OCI-LY7 (cell line): ENCODE measurements at regions of chr14 and their contacts with region 1.

Region 1: GRCh38 chr14:93970549-93970946 is 5.8 kb downstream of the ASB2 start:
- DNase-seq: peak; percentile 76
- H3K4me3 ChIP-seq: peak overlapping the region; percentile 64
- H3K27ac ChIP-seq: peak overlapping the region; percentile 57
- H3K4me1 ChIP-seq: peaks cover 93% of the 10 kb centered on the region
- CTCF ChIP-seq: peak; percentile 89

Region 2: DNA sequence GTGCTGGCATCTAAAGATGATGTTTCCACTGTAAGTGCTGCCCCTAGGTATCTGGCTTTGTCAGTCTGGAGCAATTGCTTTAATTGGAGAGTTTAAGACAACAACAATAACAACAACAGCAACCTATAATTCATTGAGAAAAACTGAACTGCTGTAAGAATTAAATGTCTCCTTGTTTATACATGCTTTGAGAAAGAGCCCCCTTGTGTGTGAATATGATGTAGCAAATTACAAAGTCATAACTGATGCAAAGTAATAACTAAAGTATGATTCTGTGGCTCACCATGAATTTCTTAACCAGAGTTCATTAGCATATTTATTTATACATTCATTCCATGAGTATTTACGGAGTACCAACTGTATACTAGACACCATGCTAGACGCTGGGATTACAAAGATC is 123.1 kb before region 1 on chr14:
- CTCF ChIA-PET with region 1: no interaction called
- POLR2A ChIA-PET with region 1: no interaction called
- intact Hi-C with region 1: no loop called
- DNase-seq: no peak
- H3K4me3 ChIP-seq: no peak overlapping the region
- H3K27ac ChIP-seq: no peak overlapping the region
- H3K4me1 ChIP-seq: no peaks in the 10 kb centered on the region
- CTCF ChIP-seq: no peak

Region 3: DNA sequence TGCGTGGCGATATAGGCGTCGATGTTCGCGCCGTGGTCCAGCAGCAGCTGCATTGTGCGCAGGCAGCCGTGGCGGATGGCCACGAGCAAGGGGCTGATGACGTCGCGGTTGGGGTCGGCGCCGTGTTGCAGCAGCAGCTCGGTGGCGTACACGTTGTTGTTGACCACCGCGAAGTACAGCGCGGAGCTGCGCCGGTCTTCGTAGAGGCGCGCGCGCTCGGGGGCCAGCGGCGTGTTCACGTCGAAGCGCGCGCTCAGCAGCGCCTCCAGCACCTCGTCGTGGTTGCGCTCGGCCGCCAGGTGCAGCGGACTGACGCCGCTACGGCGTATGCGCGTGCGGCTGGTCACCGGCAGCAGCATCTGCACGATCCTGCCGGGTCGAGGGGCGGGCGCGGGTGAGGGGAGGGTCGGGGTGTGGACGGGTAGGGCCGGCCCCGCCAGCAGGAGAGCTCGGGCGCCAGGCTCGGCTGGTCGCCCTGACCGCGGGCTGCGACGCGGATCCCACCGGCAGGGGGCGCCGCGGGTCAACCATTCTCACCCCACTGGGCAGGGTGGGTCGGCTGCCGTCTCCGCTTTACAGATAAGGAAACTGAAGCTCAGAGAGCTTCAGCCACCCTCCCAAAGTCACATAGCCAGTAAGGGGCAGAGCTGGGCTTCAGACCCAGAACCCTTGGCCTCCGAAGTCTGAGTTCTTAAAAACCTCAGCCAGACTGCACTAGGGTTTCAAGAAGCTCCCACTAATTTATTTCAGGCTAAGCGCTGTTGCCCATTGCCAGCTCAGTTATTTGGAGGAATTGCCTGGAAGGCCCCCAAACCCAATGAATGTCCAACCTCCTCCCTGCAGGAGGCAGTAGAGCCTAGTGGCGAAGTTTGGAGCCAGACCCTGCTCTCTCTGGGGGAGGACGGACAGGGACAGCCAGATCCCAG is 31.0 kb before region 1 on chr14:
- CTCF ChIA-PET with region 1: interaction called, 24 read pairs
- POLR2A ChIA-PET with region 1: interaction called, 4 read pairs
- intact Hi-C with region 1: loop called (anchors 1 kb)
- DNase-seq: peak; percentile 81
- H3K4me3 ChIP-seq: no peak overlapping the region
- H3K27ac ChIP-seq: no peak overlapping the region
- H3K4me1 ChIP-seq: peaks cover 6% of the 10 kb centered on the region
- CTCF ChIP-seq: peak; percentile 86

Region 4: DNA sequence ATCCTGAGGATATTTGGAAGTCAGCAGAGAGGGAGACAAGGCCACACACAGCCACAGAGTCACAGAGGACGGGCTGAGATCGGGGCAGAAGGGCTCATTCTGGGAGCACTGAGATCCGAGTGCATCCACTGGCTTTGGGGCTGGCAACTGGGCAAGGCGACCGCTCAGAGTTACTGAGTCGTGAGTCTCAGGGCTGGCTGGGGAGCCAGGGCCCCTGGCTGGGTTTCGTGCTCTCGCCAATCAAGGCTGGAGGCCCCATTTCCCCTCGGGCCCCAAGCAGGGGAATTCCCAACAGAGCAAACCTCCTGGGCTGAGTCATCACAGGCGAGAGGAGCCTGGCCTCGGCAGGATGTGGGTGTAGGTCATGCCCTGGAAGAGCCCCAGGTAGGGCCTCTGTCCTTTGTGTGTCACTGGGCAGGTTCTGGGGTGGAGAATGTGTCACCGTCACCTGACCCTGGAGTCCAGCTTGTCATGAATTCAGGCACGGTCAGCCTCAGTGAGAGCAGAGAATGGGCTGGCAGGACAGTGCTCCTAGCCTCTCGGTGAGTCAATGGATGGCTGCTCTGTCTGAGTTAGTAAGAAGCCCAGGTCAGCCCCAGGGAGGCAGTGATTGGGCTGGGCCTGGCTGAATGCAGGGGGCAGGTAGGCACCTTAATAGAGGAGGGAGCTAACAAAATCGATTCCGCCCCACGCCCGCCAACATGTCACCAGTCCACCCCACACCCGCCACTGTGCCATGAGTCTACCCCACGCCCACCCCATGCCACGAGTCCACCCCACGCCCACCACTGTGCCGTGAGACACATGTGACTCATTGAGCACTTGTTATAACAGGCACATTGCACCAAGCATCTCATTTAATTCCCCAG is 11.1 kb before region 1 on chr14:
- CTCF ChIA-PET with region 1: interaction called, 13 read pairs
- POLR2A ChIA-PET with region 1: interaction called, 70 read pairs
- intact Hi-C with region 1: loop called (anchors 1 kb)
- DNase-seq: peak; percentile 87
- H3K4me3 ChIP-seq: peak overlapping the region; percentile 51
- H3K27ac ChIP-seq: peak overlapping the region; percentile 92
- H3K4me1 ChIP-seq: peaks cover 99% of the 10 kb centered on the region
- CTCF ChIP-seq: no peak

Region 5: DNA sequence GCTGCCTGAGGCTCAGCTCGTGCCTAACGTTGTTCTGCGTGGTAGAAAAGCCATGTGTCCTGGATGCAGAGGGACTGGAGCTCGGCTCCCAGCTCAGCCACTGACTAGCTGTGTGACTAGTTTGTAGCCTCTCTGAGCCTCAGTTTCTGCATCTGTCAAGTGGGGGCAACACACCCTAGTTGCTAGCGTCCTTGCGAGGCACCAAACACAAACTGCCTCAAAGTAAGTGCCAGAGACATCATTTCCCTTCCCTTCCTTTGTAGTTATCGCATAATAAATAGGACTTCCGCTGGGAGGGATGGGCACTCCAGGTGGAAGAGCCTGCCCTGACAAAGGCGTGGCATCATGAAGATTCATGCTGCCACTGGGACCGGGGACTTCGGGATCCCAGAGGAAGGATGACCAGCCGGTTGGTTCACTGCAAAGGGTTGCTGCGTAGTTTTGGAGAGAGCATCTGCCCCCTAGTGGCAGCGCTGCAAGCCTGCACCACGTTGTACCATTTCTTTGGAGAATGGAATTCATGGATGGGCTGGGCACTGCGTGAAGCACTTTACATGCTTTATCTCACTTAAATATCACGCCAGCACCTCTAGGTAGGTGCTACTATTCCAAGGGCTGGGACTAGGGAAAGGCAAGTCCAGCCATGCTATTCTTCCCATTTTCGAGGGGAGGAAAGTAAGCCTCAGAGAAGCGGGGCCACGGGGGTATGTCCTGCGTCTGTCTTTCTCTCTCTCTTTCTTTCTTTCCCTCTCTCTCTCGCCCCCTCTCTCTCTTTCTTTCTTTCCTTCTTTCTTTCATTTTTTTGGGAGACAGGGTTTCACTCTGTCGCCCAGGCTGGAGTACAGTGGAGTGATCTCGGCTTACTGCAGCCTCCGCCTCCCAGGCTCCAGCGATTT is 31.2 kb after region 1 on chr14:
- CTCF ChIA-PET with region 1: interaction called, 9 read pairs
- POLR2A ChIA-PET with region 1: no interaction called
- intact Hi-C with region 1: loop called (anchors 1 kb)
- DNase-seq: peak; percentile 76
- H3K4me3 ChIP-seq: no peak overlapping the region
- H3K27ac ChIP-seq: no peak overlapping the region
- H3K4me1 ChIP-seq: peaks cover 9% of the 10 kb centered on the region
- CTCF ChIP-seq: peak; percentile 97